Adrenal gland (tissue), 19 donors: ENCODE measurements at regions of chr2 and their contacts with region 1.

Region 1: DNA sequence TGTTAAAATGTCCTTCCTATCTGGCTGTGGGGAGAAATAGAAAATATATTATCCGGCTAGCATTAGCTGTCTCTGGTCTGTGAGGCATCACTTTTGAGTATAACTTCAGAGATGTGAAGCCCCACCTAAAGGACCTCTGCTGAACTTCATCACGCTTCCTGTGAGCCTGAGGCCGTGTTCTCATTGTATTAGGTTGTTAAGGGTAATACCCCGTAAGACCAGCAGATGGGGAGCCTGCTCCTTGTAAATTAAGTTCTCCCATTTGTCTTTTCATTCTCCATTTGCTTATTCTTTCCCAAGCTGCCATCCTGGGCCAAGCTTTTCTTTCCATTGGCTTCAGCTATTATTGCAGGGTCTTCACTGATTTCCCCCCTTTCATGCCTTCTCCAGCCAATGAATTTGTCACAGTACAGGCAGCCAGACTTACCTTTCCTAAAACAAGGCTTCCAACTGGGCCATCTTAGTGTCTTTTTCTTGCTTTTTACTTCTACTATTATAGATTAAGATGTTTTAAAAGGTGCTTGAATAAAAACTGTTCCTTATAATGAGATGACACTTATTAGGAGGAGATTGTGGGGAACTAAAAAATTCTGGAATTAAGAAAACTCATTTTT is 12.4 kb downstream of the NIF3L1 start:
- DNase-seq: peak; percentile 61 to 90 (median 77)
- H3K4me3 ChIP-seq: no peak overlapping the region
- H3K27ac ChIP-seq: peak overlapping the region in 1 of 5 donors; percentile 10
- H3K4me1 ChIP-seq: peaks cover 0 to 5% of the 10 kb centered on the region in 2 donors
- H3K27me3 ChIP-seq: no peaks in the 10 kb centered on the region
- CTCF ChIP-seq: peak; percentile 58 to 90 (median 84)
- POLR2A ChIP-seq: no peak

Region 2: DNA sequence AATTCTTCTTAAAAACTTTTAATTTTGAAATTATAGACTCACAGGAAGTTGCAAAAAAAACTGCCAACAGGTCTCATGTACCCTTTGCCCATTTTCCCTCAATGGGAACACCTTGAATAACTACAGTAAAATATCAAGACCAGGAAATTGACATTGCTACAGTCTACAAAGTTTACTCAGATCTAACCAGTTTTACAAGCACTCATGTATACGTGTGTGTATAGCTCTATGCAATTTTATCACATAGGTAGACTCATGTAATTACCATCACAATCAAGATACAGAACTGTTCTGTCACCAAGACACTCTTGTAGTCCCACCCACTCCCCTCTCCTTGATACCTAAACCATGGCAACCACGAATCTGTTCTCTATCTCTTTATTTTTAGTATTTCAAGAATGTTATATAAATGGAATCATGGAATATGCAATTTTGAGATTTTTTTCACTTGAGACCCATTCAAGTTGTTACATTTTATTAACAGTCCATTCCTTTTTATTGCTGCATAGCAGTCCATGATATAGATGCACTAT is 163.3 kb after region 1 on chr2:
- intact Hi-C with region 1: loop called in 1 of 2 experiments (anchors 5 kb)
- DNase-seq: no peak
- H3K4me3 ChIP-seq: no peak overlapping the region
- H3K27ac ChIP-seq: no peak overlapping the region
- H3K4me1 ChIP-seq: peaks cover 9 to 26% of the 10 kb centered on the region in 2 donors
- H3K27me3 ChIP-seq: no peaks in the 10 kb centered on the region
- CTCF ChIP-seq: no peak
- POLR2A ChIP-seq: no peak

Region 3: GRCh38 chr2:201164166-201164565 is 262.6 kb after region 1 on chr2:
- intact Hi-C with region 1: loop called in 1 of 2 experiments (anchors 5 kb)
- DNase-seq: no peak
- H3K4me3 ChIP-seq: no peak overlapping the region
- H3K27ac ChIP-seq: no peak overlapping the region
- H3K4me1 ChIP-seq: peaks cover 0 to 5% of the 10 kb centered on the region in 2 donors
- H3K27me3 ChIP-seq: no peaks in the 10 kb centered on the region
- CTCF ChIP-seq: no peak
- POLR2A ChIP-seq: no peak

Region 4: DNA sequence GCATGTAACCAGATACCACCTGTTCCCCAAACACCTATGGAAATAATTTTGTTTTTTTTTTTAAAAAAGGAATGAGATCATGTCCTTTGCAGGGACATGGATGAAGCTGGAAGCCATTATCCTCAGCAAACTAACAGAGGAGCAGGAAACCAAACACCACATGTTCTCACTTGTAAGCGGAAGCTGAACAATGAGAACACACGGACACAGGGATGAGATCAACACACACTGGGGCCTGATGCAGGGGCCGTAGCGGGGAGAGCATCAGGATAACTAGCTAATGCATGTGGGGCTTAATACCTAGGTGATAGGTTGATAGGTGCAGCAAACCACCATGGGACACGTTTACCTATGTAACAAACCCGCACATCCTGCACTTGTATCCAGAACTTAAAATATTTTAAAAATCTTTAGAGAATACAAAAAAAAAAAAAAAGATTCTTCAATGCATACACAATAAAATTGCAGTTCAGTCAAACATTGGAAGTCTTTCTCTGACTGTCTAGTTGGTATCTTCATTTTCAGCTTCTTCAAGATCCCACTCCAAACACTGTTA is 269.8 kb after region 1 on chr2:
- intact Hi-C with region 1: loop called (anchors 5 kb)
- DNase-seq: no peak
- H3K4me3 ChIP-seq: no peak overlapping the region
- H3K27ac ChIP-seq: no peak overlapping the region
- H3K4me1 ChIP-seq: no peaks in the 10 kb centered on the region
- H3K27me3 ChIP-seq: no peaks in the 10 kb centered on the region
- CTCF ChIP-seq: no peak
- POLR2A ChIP-seq: no peak